HepG2 (cell line): ENCODE measurements at regions of chr7 and their contacts with region 1.

Region 1: GRCh38 chr7:2247141-2247995 is 5.3 kb downstream of the NUDT1 start:
- DNase-seq: no peak
- ATAC-seq: peak; percentile 73
- H3K4me3 ChIP-seq: no peak overlapping the region
- H3K27ac ChIP-seq: no peak overlapping the region
- H3K4me1 ChIP-seq: peaks cover 27% of the 10 kb centered on the region
- H3K27me3 ChIP-seq: no peaks in the 10 kb centered on the region; a peak in 1 of 5 replicates
- CTCF ChIP-seq: peak; percentile 89
- EP300 ChIP-seq: no peak
- POLR2A ChIP-seq: no peak
- RAD21 ChIP-seq: peak; percentile 67

Region 2: GRCh38 chr7:2266908-2267307 is 19.5 kb after region 1 on chr7:
- CTCF ChIA-PET with region 1: no interaction called
- POLR2A ChIA-PET with region 1: interaction called, 6 read pairs
- in situ Hi-C with region 1: no loop called
- intact Hi-C with region 1: loop called (anchors 1 kb)
- DNase-seq: no peak
- ATAC-seq: peak; percentile 18; the same call in 2 of the 3 replicates
- H3K4me3 ChIP-seq: no peak overlapping the region
- H3K27ac ChIP-seq: no peak overlapping the region
- H3K4me1 ChIP-seq: peaks cover 37% of the 10 kb centered on the region
- H3K27me3 ChIP-seq: no peaks in the 10 kb centered on the region
- CTCF ChIP-seq: no peak
- EP300 ChIP-seq: no peak
- POLR2A ChIP-seq: no peak
- RAD21 ChIP-seq: no peak